ENCODE measurements at regions of chr14 and their contacts with region 1.

Region 1: GRCh38 chr14:77409131-77409533 is 14.2 kb downstream of the NOXRED1 start:
- DNase-seq: no peak
- ATAC-seq: peak in 1 of 2 donors; percentile 23

Region 2: GRCh38 chr14:77124345-77125280 is 284.5 kb before region 1 on chr14:
- intact Hi-C with region 1: loop called in 1 of 2 experiments (anchors 10 kb)
- DNase-seq: peak; percentile 60
- ATAC-seq: peak; percentile 78 to 85